Heart left ventricle (tissue), 16 donors: ENCODE measurements at regions of chr5 and their contacts with region 1.

Region 1: GRCh38 chr5:69093771-69094482 is at the start of gene SLC30A5:
- DNase-seq: peak; percentile 99 to 100 (median 99)
- ATAC-seq: peak; percentile 99 to 100 (median 100)
- H3K4me3 ChIP-seq: peak within 1 kb of the TSS; percentile 73 to 98 (median 90)
- H3K27ac ChIP-seq: peak within 1 kb of the TSS; percentile 86 to 99 (median 96)
- H3K4me1 ChIP-seq: peaks cover 0 to 29% (median 15%) of the 10 kb centered on the region in 12 donors
- H3K27me3 ChIP-seq: no peaks in the 10 kb centered on the region
- CTCF ChIP-seq: peak; percentile 85 to 98 (median 92)
- POLR2A ChIP-seq: peak; percentile 58 to 94
- total RNA-seq, gene SLC30A5: 26.9 to 44.3 (median 30.0) TPM

Region 2: DNA sequence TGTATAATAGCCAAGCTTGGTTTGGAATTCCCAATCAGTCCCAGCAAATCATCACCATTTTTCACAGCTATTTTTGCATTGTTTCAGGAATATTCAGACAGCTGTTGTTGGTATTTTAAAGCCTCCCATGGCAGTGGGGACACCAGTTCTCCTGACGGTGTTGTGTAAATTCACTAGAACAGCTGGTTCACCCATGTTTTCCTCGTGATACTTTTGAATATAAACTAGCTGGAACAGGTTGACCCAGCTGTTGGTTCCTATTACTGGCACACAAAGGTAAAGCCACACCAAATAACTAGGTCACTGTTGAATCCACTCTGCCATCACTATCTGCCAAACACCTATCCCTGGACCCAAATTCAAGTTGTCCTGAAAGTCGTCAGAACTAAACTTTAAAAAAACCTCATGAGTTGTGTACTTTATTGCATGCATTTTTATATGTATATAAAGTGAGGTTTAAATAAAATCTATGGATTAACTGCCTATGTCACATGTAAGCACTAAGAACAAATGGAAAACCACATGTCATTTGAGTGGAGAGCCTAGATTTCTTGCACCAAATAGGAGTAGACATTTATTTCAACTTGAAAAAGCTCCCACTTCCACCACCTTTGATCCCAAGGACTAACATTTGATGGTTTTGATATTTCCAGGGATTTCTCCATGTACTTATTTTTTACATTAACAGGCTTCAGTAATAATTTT is 1000.3 kb before region 1 on chr5:
- intact Hi-C with region 1: no loop called
- DNase-seq: no peak
- ATAC-seq: no peak
- H3K4me3 ChIP-seq: no peak overlapping the region
- H3K27ac ChIP-seq: no peak overlapping the region
- H3K4me1 ChIP-seq: peaks cover 0 to 4% (median under 1%) of the 10 kb centered on the region in 12 donors
- H3K27me3 ChIP-seq: no peaks in the 10 kb centered on the region
- CTCF ChIP-seq: no peak
- POLR2A ChIP-seq: no peak

Region 3: GRCh38 chr5:69042915-69043658 is 50.8 kb before region 1 on chr5:
- intact Hi-C with region 1: loop called in 5 of 10 experiments (anchors 2 to 10 kb)
- DNase-seq: peak in 4 of 5 donors; percentile 49 to 78 (median 66)
- ATAC-seq: peak; percentile 93 to 96 (median 95)
- H3K4me3 ChIP-seq: peak overlapping the region; percentile 24 to 67 (median 52)
- H3K27ac ChIP-seq: peak overlapping the region; percentile 51 to 84 (median 74)
- H3K4me1 ChIP-seq: peaks cover 0 to 6% (median 0%) of the 10 kb centered on the region in 12 donors
- H3K27me3 ChIP-seq: no peaks in the 10 kb centered on the region
- CTCF ChIP-seq: peak; percentile 81 to 96 (median 90)
- POLR2A ChIP-seq: no peak

Region 4: DNA sequence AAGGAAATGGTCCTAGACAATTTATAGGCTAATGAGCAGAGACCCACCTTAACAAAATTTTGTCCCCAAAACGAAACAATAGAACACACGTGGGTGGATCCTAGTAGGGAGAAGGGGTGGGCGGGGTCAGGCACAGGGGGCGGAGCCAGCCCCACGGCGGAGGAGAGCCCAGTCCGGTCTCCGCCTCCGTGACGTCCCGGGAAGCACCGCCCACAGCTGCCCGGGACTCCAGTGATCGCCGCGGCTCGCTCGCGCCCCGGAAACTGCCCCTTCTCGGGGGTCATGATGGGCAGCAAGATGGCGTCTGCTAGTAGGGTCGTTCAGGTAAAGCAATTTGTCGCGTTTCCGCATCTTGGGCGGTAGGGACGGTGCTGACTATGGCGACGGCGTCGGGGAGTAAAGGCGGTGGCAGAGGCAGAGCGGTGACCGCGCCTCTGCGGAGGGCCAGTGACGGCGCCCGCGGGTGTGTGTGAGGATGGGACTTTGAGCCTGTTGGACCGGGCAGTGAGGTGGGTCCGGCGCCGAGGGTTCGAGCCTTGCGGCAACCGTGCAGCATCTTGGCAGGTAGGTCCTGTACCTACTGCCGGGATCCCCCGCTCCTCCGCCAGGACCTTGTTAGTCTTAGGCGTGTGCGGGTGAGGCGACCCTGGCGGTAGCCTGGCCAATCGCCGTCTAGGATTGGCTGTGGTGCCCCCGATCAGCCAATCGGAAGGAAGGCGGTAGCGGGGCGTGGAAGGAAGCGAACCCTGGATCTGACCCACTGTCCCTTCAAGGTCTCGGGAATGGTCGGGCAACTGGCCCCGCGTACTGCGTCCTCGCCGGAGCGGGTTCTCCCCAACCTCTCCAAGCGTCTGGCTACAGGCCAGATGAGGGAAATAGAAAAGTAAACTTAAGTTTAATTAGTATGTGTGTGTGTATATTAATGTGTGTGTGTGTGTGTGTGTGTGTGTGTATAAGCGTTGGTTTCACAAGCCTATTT is 123.9 kb after region 1 on chr5:
- intact Hi-C with region 1: loop called in 2 of 10 experiments (anchors 5 to 10 kb)
- DNase-seq: peak; percentile 98 to 99 (median 98)
- ATAC-seq: peak; percentile 98 to 99 (median 98)
- H3K4me3 ChIP-seq: peak overlapping the region; percentile 58 to 100 (median 94)
- H3K27ac ChIP-seq: peak overlapping the region; percentile 93 to 99 (median 98)
- H3K4me1 ChIP-seq: peaks cover 0 to 32% (median 12%) of the 10 kb centered on the region in 12 donors
- H3K27me3 ChIP-seq: no peaks in the 10 kb centered on the region
- CTCF ChIP-seq: peak in 10 of 12 donors; percentile 8 to 47 (median 32)
- POLR2A ChIP-seq: peak; percentile 88

Region 5: DNA sequence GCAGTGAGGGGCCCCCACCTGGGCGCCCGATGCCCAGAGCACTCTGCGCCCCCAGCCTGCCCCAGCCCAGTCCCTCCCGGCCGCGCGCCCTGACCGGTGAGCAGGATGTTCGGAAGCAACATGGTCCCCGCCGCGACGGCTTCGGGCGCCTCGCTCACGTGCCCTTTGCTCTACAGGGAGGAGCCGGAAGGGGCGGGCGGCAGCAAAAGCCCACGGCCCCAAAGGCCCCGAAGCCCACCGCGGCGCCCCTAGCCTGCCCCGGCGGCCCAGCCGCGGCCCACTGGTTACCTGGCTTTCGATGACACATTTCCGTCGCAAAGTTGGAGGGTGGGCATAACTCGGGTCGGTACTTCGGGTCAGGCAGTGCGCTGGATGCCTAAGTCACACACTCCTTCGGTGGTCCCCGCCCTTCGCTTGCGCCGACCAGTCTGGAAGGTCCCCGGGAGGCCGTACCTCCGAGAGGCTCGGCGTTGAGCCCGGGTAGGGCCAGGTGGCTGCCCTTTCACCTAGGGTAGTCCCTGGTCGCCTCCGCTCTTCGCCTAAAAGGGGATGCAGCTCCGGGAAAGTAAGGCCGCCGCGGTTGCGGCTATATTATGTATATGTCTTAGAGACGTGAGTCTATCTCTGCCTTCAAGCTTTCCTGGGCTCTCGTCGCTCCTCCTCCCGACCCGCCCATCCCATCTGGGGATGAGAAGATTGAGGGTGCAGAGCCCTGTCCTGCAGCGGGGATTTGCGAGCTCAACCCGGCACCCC is 275.6 kb after region 1 on chr5 and contains the starts of genes AK6, RAD17 and TAF9:
- intact Hi-C with region 1: loop called in 5 of 10 experiments (anchors 10 kb)
- DNase-seq: peak; percentile 92 to 96 (median 95)
- ATAC-seq: peak; percentile 97 to 99 (median 98)
- H3K4me3 ChIP-seq: peak within 1 kb of the TSS; percentile 54 to 94 (median 80)
- H3K27ac ChIP-seq: peak within 1 kb of the TSS; percentile 93 to 99 (median 98)
- H3K4me1 ChIP-seq: peaks cover 4 to 44% (median 25%) of the 10 kb centered on the region in 12 donors
- H3K27me3 ChIP-seq: no peaks in the 10 kb centered on the region
- CTCF ChIP-seq: peak in 1 of 12 donors; percentile 10
- POLR2A ChIP-seq: peak in 1 of 2 donors; percentile 66
- total RNA-seq, gene AK6: 26.2 to 43.8 (median 34.5) TPM
- total RNA-seq, gene RAD17: 17.4 to 25.8 (median 20.9) TPM
- total RNA-seq, gene TAF9: 37.8 to 51.9 (median 48.0) TPM